ENCODE measurements at regions of chr5 and their contacts with region 1.

Region 1: GRCh38 chr5:172188033-172188892 is at the start of gene STK10:
- DNase-seq: peak; percentile 84 to 94 (median 92)
- H3K4me3 ChIP-seq: peak within 1 kb of the TSS; percentile 83
- H3K4me3 Mint-ChIP-seq: peak within 1 kb of the TSS; percentile 97 to 100 (median 100)
- H3K27ac ChIP-seq: peak within 1 kb of the TSS; percentile 91
- H3K27ac Mint-ChIP-seq: peak within 1 kb of the TSS; percentile 98 to 100 (median 100)
- H3K4me1 ChIP-seq: peaks cover 22% of the 10 kb centered on the region
- H3K4me1 Mint-ChIP-seq: peaks cover 23 to 30% (median 28%) of the 10 kb centered on the region in 3 donors
- H3K27me3 ChIP-seq: no peaks in the 10 kb centered on the region
- H3K27me3 Mint-ChIP-seq: peaks cover 0 to 3% of the 10 kb centered on the region in 2 donors
- total RNA-seq, gene STK10: 113 to 118 TPM

Region 2: DNA sequence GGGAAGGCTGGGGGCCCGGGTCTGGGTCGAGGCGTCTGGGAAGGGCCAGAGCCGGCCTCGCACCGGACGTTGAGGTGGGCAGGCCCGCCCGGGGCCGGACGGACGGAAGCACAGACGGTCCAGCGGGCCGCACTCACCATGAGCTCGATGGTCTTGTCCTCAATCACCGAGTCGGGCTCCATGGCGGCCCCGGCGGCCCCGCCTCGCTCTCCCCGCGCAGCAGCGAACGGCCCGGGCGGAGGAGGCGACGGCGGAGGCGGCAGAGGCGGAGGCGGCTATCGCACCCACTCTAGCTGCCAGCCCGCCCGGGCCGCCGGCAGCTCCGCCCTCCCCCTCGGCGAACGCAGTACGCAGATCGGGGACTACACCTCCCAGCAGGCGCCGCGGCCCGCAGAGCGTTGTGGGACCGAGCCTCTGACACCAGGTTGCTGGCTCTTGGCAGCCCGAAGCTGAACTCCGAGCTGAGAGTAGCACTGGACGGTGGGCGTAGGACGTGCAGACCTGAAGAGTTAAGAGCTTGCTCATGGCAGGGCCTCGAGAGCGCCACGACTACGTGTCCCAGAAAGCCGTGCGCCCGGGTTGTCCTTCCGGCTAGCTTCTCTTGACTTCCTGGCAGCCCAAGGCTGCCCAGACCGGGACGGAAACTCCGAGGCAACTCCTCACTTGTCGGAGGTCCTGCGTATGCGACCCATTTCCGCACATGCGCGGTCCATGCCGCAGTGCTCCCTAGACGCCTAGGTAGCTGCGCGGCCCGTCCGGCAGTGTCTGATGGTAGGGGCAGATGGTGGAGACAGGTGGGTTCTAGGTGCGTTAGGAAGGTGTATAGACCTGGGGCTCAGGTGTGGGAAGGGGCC is 181.7 kb before region 1 on chr5 and contains the start of gene FBXW11:
- CTCF ChIA-PET with region 1: interaction called, 29 read pairs
- POLR2A ChIA-PET with region 1: interaction called, 15 read pairs
- DNase-seq: peak; percentile 93 to 98 (median 94)
- H3K4me3 ChIP-seq: peak within 1 kb of the TSS; percentile 100
- H3K4me3 Mint-ChIP-seq: peak within 1 kb of the TSS; percentile 89 to 97 (median 95)
- H3K27ac ChIP-seq: peak within 1 kb of the TSS; percentile 97
- H3K27ac Mint-ChIP-seq: peak within 1 kb of the TSS; percentile 89 to 100 (median 98)
- H3K4me1 ChIP-seq: peaks cover 49% of the 10 kb centered on the region
- H3K4me1 Mint-ChIP-seq: peaks cover 48 to 59% (median 56%) of the 10 kb centered on the region in 3 donors
- H3K27me3 ChIP-seq: no peaks in the 10 kb centered on the region
- H3K27me3 Mint-ChIP-seq: no peaks in the 10 kb centered on the region
- total RNA-seq, gene FBXW11: 44.7 to 46.9 TPM

Region 3: DNA sequence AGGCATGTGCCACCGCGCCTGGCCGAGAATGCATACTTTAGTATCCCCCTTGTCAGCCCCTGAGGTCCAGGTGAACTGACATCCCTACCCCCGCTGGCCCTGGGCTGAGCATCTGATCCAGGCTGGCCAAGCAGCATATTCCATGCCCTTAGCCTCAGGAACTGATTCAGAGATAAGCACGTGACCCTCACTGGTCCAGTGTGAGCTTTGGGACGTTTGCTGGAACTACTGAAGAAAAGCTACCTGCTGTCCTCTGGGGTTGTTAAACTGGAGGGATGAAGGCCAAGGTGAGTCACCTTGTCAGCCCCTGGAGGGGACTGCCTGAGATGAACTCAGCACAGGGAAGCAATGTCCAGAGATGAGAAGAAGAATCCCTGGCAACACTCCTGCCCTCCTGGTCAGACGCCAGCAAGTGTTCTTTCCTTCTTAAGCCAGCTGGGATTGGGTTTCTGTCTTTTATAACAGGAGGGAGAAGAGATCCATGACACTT is 122.7 kb before region 1 on chr5:
- CTCF ChIA-PET with region 1: interaction called, 22 read pairs
- POLR2A ChIA-PET with region 1: interaction called, 3 read pairs
- DNase-seq: no peak
- H3K4me3 ChIP-seq: no peak overlapping the region
- H3K4me3 Mint-ChIP-seq: peak overlapping the region in 5 of 7 donors; percentile 28 to 84 (median 73)
- H3K27ac ChIP-seq: no peak overlapping the region
- H3K27ac Mint-ChIP-seq: peak overlapping the region in 6 of 8 donors; percentile 69 to 99 (median 93)
- H3K4me1 ChIP-seq: peaks cover 56% of the 10 kb centered on the region
- H3K4me1 Mint-ChIP-seq: peaks cover 60 to 72% (median 71%) of the 10 kb centered on the region in 3 donors
- H3K27me3 ChIP-seq: no peaks in the 10 kb centered on the region
- H3K27me3 Mint-ChIP-seq: peaks cover 0 to 2% of the 10 kb centered on the region in 2 donors

Region 4: DNA sequence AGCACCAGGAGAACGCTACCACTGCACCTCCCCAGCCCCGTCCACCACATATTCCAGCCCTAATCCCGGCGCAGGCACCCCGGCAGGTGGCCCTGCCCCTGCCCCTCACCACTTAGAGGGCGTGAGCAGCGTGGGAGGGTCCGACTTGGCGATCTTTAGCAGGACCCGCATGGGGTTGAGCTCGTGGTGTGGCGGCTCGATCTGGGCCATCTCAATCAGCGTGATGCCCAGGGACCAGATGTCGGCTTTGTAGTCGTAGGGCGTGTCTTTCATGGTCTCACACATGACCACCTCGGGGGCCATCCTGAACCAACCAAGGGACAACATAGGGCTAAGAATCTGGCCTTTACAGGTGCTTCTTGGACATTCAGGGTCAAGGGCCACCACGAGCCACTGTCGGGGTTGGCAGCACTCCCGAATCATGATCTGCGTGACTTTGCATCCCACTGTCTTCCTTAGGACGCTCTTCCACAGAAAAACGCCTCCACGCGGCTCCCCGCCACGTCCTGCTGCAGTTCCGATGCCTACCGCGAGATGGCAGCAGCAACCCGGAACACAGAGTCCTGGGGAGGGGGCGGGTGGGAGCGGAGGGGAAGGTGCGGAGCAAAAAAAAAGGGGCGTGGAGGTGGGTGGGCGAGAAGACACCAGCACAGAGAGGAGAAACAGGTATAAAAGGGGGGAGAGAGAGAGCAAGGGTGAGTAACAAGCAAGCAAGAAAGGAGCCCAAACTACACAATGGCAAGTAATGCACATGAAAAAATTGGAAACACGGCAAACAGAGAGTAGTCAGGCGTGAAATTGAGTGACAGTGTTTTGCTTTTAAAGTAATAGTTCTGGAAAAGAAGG is 81.5 kb before region 1 on chr5:
- CTCF ChIA-PET with region 1: interaction called, 177 read pairs
- POLR2A ChIA-PET with region 1: interaction called, 23 read pairs
- DNase-seq: peak; percentile 51 to 75 (median 59)
- H3K4me3 ChIP-seq: no peak overlapping the region
- H3K4me3 Mint-ChIP-seq: peak overlapping the region in 5 of 7 donors; percentile 6 to 53 (median 43)
- H3K27ac ChIP-seq: no peak overlapping the region
- H3K27ac Mint-ChIP-seq: peak overlapping the region; percentile 73 to 89 (median 82)
- H3K4me1 ChIP-seq: peaks cover 38% of the 10 kb centered on the region
- H3K4me1 Mint-ChIP-seq: peaks cover 41 to 60% (median 52%) of the 10 kb centered on the region in 3 donors
- H3K27me3 ChIP-seq: no peaks in the 10 kb centered on the region
- H3K27me3 Mint-ChIP-seq: peaks cover 0 to 4% of the 10 kb centered on the region in 2 donors

Region 5: GRCh38 chr5:172133359-172134029 is 54.8 kb before region 1 on chr5:
- CTCF ChIA-PET with region 1: interaction called, 34 read pairs
- POLR2A ChIA-PET with region 1: interaction called, 3 read pairs
- DNase-seq: peak in 1 of 5 donors; percentile 63
- H3K4me3 ChIP-seq: no peak overlapping the region
- H3K4me3 Mint-ChIP-seq: peak overlapping the region in 6 of 7 donors; percentile 58 to 77 (median 70)
- H3K27ac ChIP-seq: no peak overlapping the region
- H3K27ac Mint-ChIP-seq: peak overlapping the region; percentile 70 to 97 (median 85)
- H3K4me1 ChIP-seq: peaks cover 37% of the 10 kb centered on the region
- H3K4me1 Mint-ChIP-seq: peaks cover 66 to 86% (median 79%) of the 10 kb centered on the region in 3 donors
- H3K27me3 ChIP-seq: no peaks in the 10 kb centered on the region
- H3K27me3 Mint-ChIP-seq: peaks cover 0 to 2% of the 10 kb centered on the region in 2 donors

Region 6: DNA sequence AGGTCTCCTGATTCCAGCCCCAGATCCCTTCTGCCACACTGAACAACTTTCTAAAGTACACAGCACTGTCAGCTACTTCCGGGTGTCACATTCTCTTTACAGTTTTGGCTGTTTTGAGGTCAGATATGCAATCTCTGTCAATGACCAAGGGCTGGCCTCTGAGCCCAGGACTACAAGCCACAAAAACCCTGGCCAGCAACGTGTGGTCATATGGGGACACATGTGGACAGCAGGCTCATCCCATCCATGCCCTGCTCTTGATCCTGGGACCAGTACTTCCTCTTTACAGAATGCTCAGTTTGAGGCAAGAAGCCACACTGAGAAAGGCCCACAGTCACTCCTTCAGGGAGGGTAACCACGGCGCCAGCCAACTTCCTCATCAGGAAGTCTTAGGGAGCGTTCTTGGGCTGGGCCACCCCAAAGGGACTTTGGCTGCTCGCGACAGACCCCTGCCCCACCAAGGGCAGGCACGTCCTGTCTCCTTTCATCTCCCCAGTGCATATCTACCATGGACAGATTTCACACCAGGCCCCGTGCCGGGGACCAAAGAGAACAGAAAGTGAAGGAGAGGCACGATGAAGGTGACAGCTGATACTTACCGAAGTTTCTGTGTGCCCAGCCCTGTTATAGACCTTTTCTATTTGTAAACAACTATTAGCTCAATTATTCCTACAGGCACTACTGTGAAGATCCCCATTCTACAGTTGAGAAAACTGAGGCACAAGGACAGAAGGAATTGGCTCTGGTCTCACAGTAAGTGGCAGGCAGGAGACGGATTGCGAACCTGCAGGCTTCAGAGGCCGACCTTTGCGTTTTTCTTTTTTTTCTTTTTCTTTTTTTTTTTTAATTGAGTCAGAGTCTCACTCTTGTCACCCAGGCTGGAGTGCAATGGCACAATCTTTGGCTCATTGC is 37.5 kb before region 1 on chr5:
- CTCF ChIA-PET with region 1: interaction called, 33 read pairs
- POLR2A ChIA-PET with region 1: no interaction called
- DNase-seq: peak; percentile 10 to 50 (median 29)
- H3K4me3 ChIP-seq: peak overlapping the region; percentile 1
- H3K4me3 Mint-ChIP-seq: peak overlapping the region; percentile 38 to 80 (median 74)
- H3K27ac ChIP-seq: peak overlapping the region; percentile 50
- H3K27ac Mint-ChIP-seq: peak overlapping the region; percentile 89 to 96 (median 94)
- H3K4me1 ChIP-seq: peaks cover 85% of the 10 kb centered on the region
- H3K4me1 Mint-ChIP-seq: peaks cover 75 to 91% (median 90%) of the 10 kb centered on the region in 3 donors
- H3K27me3 ChIP-seq: no peaks in the 10 kb centered on the region
- H3K27me3 Mint-ChIP-seq: no peaks in the 10 kb centered on the region

Region 7: GRCh38 chr5:172283020-172283861 is 95.0 kb after region 1 on chr5 and contains the start of gene UBTD2:
- CTCF ChIA-PET with region 1: interaction called, 12 read pairs
- POLR2A ChIA-PET with region 1: interaction called, 4 read pairs
- DNase-seq: peak; percentile 59 to 78 (median 74)
- H3K4me3 ChIP-seq: peak within 1 kb of the TSS; percentile 67
- H3K4me3 Mint-ChIP-seq: peak within 1 kb of the TSS; percentile 87 to 95 (median 89)
- H3K27ac ChIP-seq: no peak within 1 kb of the TSS
- H3K27ac Mint-ChIP-seq: peak within 1 kb of the TSS; percentile 21 to 93 (median 76)
- H3K4me1 ChIP-seq: peaks cover 16% of the 10 kb centered on the region
- H3K4me1 Mint-ChIP-seq: peaks cover 20 to 34% (median 25%) of the 10 kb centered on the region in 3 donors
- H3K27me3 ChIP-seq: no peaks in the 10 kb centered on the region
- H3K27me3 Mint-ChIP-seq: no peaks in the 10 kb centered on the region
- total RNA-seq, gene UBTD2: 7.4 to 7.5 TPM